GM12878 (cell line): ENCODE measurements at regions of chr2 and their contacts with region 1.

Region 1: DNA sequence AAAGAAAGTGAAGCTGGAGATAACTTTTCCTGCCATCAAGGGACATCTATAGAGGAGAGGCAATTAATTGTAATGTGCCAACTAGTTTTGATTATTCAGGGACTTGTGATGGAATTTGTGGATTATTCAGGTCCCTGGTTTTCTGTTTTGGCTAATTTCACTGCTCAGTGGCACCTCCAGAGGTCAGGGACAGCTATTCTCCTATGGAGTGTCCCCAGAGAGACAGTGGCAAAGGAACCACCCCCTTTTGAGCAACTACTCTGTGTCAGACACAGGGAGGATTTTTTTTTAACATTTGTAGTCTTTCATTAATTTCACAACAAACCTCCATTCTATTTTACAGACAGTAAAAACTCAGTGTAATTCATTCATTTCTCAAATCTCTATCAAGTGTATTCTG is 206.0 kb upstream of the SPRED2 start:
- DNase-seq: no peak
- ATAC-seq: peak; percentile 61
- H3K4me3 ChIP-seq: no peak overlapping the region
- H3K27ac ChIP-seq: no peak overlapping the region
- H3K4me1 ChIP-seq: no peaks in the 10 kb centered on the region
- H3K27me3 ChIP-seq: peaks cover 2 to 6% of the 10 kb centered on the region in 2 experiments; a peak in 3 of 4 replicates
- CTCF ChIP-seq: 0 out of 6 replicates have a peak, but pooled peaks of 2 of the 3 experiments have one; percentile 14 to 19
- EP300 ChIP-seq: no peak
- POLR2A ChIP-seq: no peak
- RAD21 ChIP-seq: peak; percentile 27; the same call in 1 of the 2 replicates

Region 2: GRCh38 chr2:65710779-65711295 is 72.4 kb after region 1 on chr2:
- CTCF ChIA-PET with region 1: interaction called, 26 read pairs
- POLR2A ChIA-PET with region 1: no interaction called
- RAD21 ChIA-PET with region 1: interaction called, 10 read pairs
- SMC1A ChIA-PET with region 1: interaction called, 10 read pairs
- in situ Hi-C with region 1: no loop called
- intact Hi-C with region 1: loop called (anchors 1 kb)
- DNase-seq: no peak
- ATAC-seq: peak; percentile 70
- H3K4me3 ChIP-seq: no peak overlapping the region
- H3K27ac ChIP-seq: no peak overlapping the region
- H3K4me1 ChIP-seq: no peaks in the 10 kb centered on the region
- H3K27me3 ChIP-seq: peaks cover 0 to 4% of the 10 kb centered on the region in 2 experiments; a peak in 1 of 4 replicates
- CTCF ChIP-seq: peak; percentile 44 to 63 (median 53); a peak in 4 of 6 replicates
- EP300 ChIP-seq: no peak
- POLR2A ChIP-seq: no peak
- RAD21 ChIP-seq: peak; percentile 72

Region 3: DNA sequence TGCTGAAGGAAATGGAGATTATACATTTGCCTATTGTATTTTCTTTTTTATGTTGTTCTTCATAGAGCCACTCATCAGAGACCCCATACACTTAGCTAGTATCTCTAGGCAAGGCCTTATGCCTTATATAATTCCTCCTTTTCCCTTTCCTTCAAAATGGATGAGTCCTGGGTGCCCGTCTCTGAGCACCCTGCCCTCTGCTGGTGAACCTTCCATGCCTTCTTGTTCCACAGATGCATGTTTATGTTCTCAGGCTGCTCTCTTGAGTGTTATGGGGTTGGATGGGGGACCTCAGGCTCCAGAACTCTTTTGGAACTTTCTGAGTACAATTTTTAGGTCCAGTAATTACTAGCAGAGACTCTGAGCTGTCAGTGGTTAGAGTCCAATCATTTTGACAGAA is 162.6 kb after region 1 on chr2:
- CTCF ChIA-PET with region 1: interaction called, 4 read pairs
- POLR2A ChIA-PET with region 1: no interaction called
- RAD21 ChIA-PET with region 1: no interaction called
- SMC1A ChIA-PET with region 1: no interaction called
- in situ Hi-C with region 1: no loop called
- intact Hi-C with region 1: loop called (anchors 1 kb)
- DNase-seq: no peak
- ATAC-seq: no peak
- H3K4me3 ChIP-seq: no peak overlapping the region
- H3K27ac ChIP-seq: no peak overlapping the region
- H3K4me1 ChIP-seq: no peaks in the 10 kb centered on the region
- H3K27me3 ChIP-seq: no peaks in the 10 kb centered on the region
- CTCF ChIP-seq: peak; percentile 19 to 29 (median 23); a peak in 3 of 6 replicates
- EP300 ChIP-seq: no peak
- POLR2A ChIP-seq: no peak
- RAD21 ChIP-seq: peak; percentile 16; the same call in 1 of the 2 replicates